Mammary epithelial cell (primary cell): ENCODE measurements at regions of chr5 and their contacts with region 1.

Region 1: GRCh38 chr5:138054847-138055558 is 22.1 kb upstream of the FAM13B start:
- DNase-seq: peak; percentile 26
- H3K4me3 ChIP-seq: no peak overlapping the region
- H3K27ac ChIP-seq: no peak overlapping the region
- H3K4me1 ChIP-seq: no peaks in the 10 kb centered on the region
- H3K27me3 ChIP-seq: no peaks in the 10 kb centered on the region
- CTCF ChIP-seq: no peak

Region 2: GRCh38 chr5:138018844-138019243 is 36.2 kb before region 1 on chr5:
- CTCF ChIA-PET with region 1: no interaction called
- dilution Hi-C with region 1: no loop called
- in situ Hi-C with region 1: no loop called
- intact Hi-C with region 1: no loop called
- DNase-seq: no peak
- H3K4me3 ChIP-seq: no peak overlapping the region
- H3K27ac ChIP-seq: no peak overlapping the region
- H3K4me1 ChIP-seq: peaks cover 17% of the 10 kb centered on the region
- H3K27me3 ChIP-seq: no peaks in the 10 kb centered on the region
- CTCF ChIP-seq: no peak

Region 3: DNA sequence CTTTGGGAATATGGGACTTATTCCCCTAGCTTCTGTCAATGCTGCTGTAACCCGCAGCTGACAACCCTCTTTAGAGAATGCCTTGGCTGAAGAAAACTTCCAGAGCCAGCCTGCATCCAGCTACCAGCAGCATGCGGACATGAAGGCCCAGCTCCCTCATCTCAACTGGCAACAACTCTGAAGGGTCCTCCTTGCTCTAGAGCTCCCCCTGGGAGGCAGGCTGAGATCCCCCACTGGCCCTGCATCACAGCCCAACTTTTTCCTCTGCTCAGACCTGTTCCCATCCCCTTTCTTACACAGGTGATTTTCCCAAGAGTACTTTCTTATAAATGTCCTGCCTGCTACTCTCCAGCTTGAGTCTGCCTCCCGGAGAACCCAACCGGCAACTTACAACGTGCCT is 10.1 kb after region 1 on chr5:
- CTCF ChIA-PET with region 1: interaction called, 13 read pairs
- dilution Hi-C with region 1: no loop called
- in situ Hi-C with region 1: no loop called
- intact Hi-C with region 1: no loop called
- DNase-seq: no peak
- H3K4me3 ChIP-seq: no peak overlapping the region
- H3K27ac ChIP-seq: no peak overlapping the region
- H3K4me1 ChIP-seq: no peaks in the 10 kb centered on the region
- H3K27me3 ChIP-seq: no peaks in the 10 kb centered on the region
- CTCF ChIP-seq: peak in 1 of 2 donors; percentile 28

Region 4: GRCh38 chr5:138093036-138093435 is 38.0 kb after region 1 on chr5:
- CTCF ChIA-PET with region 1: no interaction called
- dilution Hi-C with region 1: loop called (anchors 5 kb)
- in situ Hi-C with region 1: no loop called
- intact Hi-C with region 1: no loop called
- DNase-seq: no peak
- H3K4me3 ChIP-seq: no peak overlapping the region
- H3K27ac ChIP-seq: no peak overlapping the region
- H3K4me1 ChIP-seq: peaks cover 14% of the 10 kb centered on the region
- H3K27me3 ChIP-seq: no peaks in the 10 kb centered on the region
- CTCF ChIP-seq: no peak